ENCODE measurements at regions of chrX and their contacts with region 1.

Region 1: DNA sequence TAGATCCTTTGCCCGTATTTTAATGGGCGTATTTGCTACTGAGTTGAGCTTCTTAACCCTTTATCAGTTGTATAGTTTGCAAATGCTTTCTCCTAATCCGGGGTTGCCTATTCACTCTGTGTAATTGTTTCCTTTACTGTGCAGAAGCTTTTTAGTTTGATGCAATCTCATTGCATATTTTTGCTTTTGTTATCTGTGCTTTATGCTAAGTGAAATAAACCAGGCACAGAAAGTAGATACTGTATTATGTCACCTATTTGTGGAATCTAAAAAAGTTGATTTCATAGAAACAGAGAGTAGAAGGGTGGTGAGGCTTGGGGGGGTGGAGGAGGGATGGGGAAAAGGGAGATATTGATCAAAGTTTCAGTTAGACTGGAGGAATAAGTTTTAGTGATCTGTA is 17.7 kb downstream of the OGT start:
- DNase-seq: no peak
- ATAC-seq: no peak
- H3K4me3 ChIP-seq: no peak overlapping the region
- H3K27ac ChIP-seq: no peak overlapping the region
- H3K4me1 ChIP-seq: no peaks in the 10 kb centered on the region
- H3K27me3 ChIP-seq: peaks cover 0 to 3% (median 0%) of the 10 kb centered on the region in 4 donors
- CTCF ChIP-seq: no peak

Region 2: DNA sequence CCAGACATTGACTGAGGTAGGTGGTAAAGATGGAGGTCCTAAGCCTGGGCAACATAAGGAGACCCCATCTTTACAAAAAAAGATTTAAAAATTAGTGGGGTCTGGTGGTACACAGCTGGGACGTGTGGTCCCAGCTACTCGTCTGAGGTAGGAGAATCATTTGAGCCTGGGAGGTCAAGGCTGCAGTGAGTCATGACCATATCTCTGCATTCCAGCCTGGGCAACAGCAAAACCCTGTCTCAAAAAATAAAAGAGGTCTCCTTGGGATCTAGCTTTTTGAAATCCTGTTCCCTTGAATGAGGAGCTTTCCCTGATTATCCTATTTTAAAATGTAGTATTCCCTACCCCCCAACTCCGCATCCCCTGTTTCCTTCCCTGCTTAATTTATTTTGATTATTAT is 96.4 kb before region 1 on chrX:
- intact Hi-C with region 1: loop called in 1 of 3 experiments (anchors 10 kb)
- DNase-seq: no peak
- ATAC-seq: no peak
- H3K4me3 ChIP-seq: no peak overlapping the region
- H3K27ac ChIP-seq: no peak overlapping the region
- H3K4me1 ChIP-seq: no peaks in the 10 kb centered on the region
- H3K27me3 ChIP-seq: no peaks in the 10 kb centered on the region
- CTCF ChIP-seq: no peak

Region 3: DNA sequence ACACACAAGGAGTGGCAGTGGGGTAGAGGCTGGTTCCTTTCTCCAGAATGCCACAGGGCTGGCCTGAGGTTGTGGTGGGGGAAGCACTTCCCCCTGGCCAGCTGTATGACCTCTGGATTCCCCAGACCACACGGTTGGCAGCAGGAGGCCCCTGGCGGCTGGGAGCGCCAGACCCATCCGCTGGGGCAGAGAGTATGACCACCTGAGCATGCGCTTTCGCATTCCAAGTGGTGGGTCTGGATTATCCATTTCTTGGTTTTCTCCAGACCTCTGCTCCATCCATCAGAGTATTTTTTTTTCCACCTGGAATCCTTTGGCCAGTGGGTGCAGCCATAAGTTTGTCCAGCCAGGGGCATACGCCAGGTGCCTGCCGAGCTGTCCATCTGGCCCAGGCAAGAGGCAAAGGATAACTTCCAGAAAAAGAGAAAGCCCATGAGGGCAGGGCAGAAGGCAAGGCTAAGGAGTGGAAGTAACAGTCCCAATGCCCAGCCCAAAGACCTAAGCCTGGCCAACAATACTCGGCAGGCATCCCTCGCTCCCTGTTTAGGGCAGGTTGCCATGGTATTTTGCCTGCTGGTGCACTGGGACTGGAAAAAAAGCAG is 399.4 kb after region 1 on chrX:
- intact Hi-C with region 1: no loop called
- DNase-seq: no peak
- ATAC-seq: no peak
- H3K4me3 ChIP-seq: no peak overlapping the region
- H3K27ac ChIP-seq: no peak overlapping the region
- H3K4me1 ChIP-seq: no peaks in the 10 kb centered on the region
- H3K27me3 ChIP-seq: peaks cover 0 to 14% (median 3%) of the 10 kb centered on the region in 4 donors
- CTCF ChIP-seq: no peak

Measured in pancreas (tissue), 10 donors.